AG04450 (cell line): ENCODE measurements at regions of chr11 and their contacts with region 1.

Region 1: DNA sequence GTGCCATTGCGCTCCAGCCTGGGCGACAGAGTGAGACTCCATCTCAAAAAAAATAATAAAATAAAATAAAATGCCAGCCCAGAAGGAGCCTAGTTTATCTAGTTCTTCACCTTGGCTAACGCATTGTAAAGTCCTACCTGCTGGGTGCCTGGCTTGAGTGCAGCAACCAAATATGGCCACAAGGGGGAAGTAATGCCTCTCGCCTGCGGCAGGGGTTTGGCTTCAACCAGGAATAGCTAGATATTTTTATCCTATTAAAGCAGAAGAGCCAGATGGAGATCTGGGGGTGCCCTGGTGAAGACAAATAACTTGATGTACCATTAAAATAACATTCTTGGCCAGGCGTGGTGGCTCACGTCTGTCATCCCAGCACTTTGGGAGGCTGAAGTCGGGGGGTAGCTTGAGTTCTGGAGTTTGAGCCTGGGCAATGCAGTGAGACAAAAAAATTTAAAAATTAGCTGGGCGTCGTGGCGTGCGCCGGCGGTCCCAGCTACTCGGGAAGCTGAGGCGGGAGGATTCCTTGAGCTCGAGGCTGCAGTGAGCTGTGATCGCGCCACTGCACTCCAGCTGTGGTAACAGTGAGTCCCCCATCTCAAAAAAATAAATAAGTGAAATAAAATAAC is 20.6 kb upstream of the PLEKHB1 start:
- DNase-seq: peak; percentile 23
- H3K4me3 ChIP-seq: no peak overlapping the region; the same call in 1 of the 2 replicates
- H3K27ac ChIP-seq: no peak overlapping the region
- H3K27me3 ChIP-seq: peaks cover 26% of the 10 kb centered on the region
- CTCF ChIP-seq: peak; percentile 94

Region 2: GRCh38 chr11:73478738-73479347 is 147.0 kb before region 1 on chr11:
- CTCF ChIA-PET with region 1: interaction called, 35 read pairs
- POLR2A ChIA-PET with region 1: no interaction called
- DNase-seq: no peak
- H3K4me3 ChIP-seq: no peak overlapping the region
- H3K27ac ChIP-seq: no peak overlapping the region
- H3K27me3 ChIP-seq: no peaks in the 10 kb centered on the region
- CTCF ChIP-seq: peak; percentile 94

Region 3: DNA sequence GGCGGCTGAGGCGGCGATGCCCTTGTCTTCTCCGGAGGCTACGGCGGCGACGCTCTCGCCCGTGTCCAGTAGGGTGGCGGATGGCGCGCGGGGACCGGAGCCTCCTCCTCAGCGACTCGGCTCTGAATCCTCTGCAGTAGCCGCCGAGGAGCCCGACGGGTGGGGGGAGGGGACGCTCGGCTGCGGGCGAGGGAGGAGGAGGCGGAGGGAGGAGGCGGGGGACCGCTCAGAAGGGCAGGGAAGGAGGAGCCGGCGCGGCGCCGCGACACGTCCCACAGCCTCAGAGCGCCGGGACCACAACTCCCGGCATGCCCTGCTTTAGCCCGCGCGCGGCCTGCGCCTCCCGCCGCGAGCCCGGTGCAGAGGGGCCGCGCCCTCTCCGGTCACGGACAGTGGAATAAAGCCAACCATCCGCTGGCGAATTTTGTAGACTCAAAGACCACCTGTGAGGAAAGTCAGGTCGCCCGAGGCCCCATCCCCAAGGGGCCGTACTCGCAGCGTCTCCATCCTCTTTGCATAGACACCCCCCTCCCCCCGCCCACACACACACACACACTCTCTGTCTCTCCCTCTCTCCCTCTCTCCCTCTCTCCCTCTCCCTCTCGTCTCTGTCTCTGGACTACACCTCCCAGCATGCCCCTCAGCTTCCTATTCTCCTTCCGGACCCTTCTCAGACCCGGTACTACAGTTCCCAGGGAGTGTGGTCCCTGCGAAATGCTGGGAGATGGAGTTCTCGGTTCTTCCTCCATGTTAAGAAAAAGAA is 27.7 kb before region 1 on chr11 and contains the start of gene FAM168A:
- CTCF ChIA-PET with region 1: interaction called, 11 read pairs
- POLR2A ChIA-PET with region 1: no interaction called
- DNase-seq: peak; percentile 92
- H3K4me3 ChIP-seq: peak within 1 kb of the TSS; percentile 80
- H3K27ac ChIP-seq: peak within 1 kb of the TSS; percentile 43
- H3K27me3 ChIP-seq: no peaks in the 10 kb centered on the region
- CTCF ChIP-seq: no peak
- polyA plus RNA-seq, gene FAM168A: 21.3 and 23.6 TPM in 2 replicates

Region 4: GRCh38 chr11:73636249-73636648 is 10.4 kb after region 1 on chr11:
- CTCF ChIA-PET with region 1: interaction called, 35 read pairs
- POLR2A ChIA-PET with region 1: no interaction called
- DNase-seq: no peak
- H3K4me3 ChIP-seq: no peak overlapping the region
- H3K27ac ChIP-seq: no peak overlapping the region
- H3K27me3 ChIP-seq: peaks cover 3% of the 10 kb centered on the region
- CTCF ChIP-seq: no peak

Region 5: DNA sequence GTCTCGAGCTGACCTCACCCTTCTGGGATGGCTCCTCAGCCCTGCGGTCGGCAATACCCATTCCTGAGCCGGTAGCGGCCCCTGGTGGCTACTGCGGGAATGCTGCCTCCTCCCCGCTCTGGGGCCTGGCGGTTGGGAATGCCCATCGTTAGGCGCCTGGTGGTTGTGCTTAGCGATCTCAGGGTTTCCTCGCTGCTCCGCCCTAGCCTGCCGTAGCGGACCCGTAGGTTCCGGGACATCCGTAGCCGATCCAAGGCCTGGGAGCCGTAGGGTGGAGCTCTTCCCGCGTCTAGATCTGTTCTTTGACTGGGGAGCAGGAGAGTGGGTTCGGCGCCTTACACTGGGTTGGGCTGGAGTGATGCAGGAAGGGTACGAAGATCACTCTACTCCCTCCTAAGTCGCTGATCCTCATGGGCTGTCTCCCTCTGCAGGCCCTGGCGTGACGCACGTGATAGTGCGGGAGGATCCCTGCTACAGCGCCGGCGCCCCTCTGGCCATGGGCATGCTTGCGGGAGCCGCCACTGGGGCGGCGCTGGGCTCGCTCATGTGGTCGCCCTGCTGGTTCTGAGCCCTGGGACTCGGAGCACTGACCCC is 35.3 kb after region 1 on chr11:
- CTCF ChIA-PET with region 1: interaction called, 125 read pairs
- POLR2A ChIA-PET with region 1: interaction called, 3 read pairs
- DNase-seq: peak; percentile 49
- H3K4me3 ChIP-seq: peak overlapping the region; percentile 55
- H3K27ac ChIP-seq: peak overlapping the region; percentile 11
- H3K27me3 ChIP-seq: no peaks in the 10 kb centered on the region
- CTCF ChIP-seq: peak; percentile 98

Region 6: GRCh38 chr11:73931039-73931645 is 305.3 kb after region 1 on chr11:
- CTCF ChIA-PET with region 1: interaction called, 14 read pairs
- POLR2A ChIA-PET with region 1: no interaction called
- DNase-seq: peak; percentile 54
- H3K4me3 ChIP-seq: no peak overlapping the region
- H3K27ac ChIP-seq: no peak overlapping the region
- H3K27me3 ChIP-seq: no peaks in the 10 kb centered on the region
- CTCF ChIP-seq: peak; percentile 59